Posterior cingulate gyrus (tissue), 11 donors: ENCODE measurements at regions of chr5 and their contacts with region 1.

Region 1: DNA sequence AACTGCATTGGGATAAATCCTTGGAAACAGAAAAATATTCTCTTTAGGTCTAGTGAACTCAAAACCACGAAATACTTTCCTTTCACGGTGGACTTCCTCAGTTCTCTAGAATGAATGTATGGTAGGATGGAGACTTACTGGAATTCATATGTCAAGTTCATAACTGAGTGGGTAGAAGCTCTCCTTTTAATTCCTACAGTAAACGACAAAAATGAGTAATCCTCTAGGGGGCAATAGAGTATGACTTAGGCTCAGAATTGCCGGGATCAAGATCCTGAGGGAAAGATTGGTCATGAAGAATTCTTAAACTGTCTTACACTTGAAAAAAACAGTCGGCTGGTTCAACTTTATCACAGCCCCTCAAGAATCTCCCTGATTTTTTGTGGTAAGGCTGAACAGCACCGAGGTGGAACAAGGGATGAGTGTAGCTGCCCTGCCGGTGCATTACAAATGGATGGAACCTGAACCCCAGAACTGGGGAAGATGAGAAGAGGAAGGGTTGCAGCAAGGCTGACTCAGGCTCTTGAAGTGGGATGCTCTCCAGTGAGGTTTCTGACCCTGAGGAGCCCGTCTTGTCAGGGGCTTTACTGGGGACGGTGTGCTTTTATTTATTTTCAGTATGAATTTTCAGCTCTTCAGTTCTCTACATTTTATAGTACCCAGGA is 14.0 kb upstream of the LOX start:
- DNase-seq: no peak

Region 2: DNA sequence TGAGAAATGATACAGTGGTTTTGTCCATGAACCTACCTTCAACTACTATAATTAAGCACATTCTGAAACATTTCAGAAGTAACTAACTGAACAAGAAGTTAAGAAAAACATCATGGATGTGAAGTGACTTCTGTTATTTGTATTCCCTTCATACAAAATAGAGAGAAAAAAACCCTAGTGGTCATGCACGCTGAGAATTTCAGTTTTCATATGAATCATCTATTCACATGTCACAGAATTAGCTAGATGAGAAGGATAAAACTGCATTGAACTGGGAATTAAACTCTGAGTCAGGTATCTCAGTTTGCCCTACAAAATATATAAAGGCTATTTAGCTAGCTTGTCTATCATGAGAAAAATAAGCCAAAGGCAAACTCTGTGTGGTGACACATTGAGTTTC is 692.2 kb before region 1 on chr5:
- intact Hi-C with region 1: no loop called
- DNase-seq: no peak

Region 3: GRCh38 chr5:122156724-122157325 is 64.8 kb after region 1 on chr5:
- intact Hi-C with region 1: loop called (anchors 5 kb)
- DNase-seq: peak in 1 of 10 donors; percentile 11